PC-9 (cell line): ENCODE measurements at regions of chr20 and their contacts with region 1.

Region 1: DNA sequence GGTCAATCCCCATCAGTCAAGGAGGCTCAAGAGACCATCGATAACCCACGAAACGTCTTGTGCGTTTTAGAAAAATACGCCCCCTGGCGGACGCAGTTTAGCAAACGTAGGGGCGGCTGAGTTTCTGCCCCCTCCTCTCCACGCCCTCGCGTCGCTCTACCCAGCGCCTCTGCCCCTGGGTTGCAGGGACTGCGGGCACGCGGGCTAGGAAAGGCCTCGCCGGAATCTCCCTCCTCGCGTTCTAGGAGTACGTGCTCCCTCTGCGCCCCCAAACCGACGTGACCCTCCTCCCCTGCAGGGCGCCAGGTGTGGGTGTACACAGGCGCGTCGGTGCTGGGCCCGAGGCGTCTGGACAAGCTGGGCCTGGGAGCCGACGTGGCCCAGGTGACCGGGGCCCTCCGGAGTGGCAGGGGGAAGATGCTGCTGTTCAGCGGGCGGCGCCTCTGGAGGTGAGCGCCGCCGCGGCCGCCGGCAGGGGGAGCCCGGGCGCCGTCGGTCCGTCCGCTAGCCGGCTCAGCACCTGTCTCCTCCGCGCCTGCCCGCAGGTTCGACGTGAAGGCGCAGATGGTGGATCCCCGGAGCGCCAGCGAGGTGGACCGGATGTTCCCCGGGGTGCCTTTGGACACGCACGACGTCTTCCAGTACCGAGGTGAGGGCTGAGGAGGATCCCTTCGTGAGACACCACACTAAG is 5.3 kb downstream of the MMP9 start:
- DNase-seq: peak in 1 of 2 experiments; percentile 71
- H3K4me3 ChIP-seq: no peak overlapping the region
- H3K27ac ChIP-seq: no peak overlapping the region
- H3K4me1 ChIP-seq: peaks cover 3% of the 10 kb centered on the region; the same call in 1 of the 2 replicates
- H3K27me3 ChIP-seq: no peaks in the 10 kb centered on the region
- CTCF ChIP-seq: peak; percentile 96

Region 2: GRCh38 chr20:45742581-45742980 is 271.4 kb before region 1 on chr20:
- CTCF ChIA-PET with region 1: no interaction called
- POLR2A ChIA-PET with region 1: no interaction called
- intact Hi-C with region 1: no loop called
- DNase-seq: no peak
- H3K4me3 ChIP-seq: no peak overlapping the region
- H3K27ac ChIP-seq: no peak overlapping the region
- H3K4me1 ChIP-seq: no peaks in the 10 kb centered on the region
- H3K27me3 ChIP-seq: no peaks in the 10 kb centered on the region
- CTCF ChIP-seq: no peak

Region 3: DNA sequence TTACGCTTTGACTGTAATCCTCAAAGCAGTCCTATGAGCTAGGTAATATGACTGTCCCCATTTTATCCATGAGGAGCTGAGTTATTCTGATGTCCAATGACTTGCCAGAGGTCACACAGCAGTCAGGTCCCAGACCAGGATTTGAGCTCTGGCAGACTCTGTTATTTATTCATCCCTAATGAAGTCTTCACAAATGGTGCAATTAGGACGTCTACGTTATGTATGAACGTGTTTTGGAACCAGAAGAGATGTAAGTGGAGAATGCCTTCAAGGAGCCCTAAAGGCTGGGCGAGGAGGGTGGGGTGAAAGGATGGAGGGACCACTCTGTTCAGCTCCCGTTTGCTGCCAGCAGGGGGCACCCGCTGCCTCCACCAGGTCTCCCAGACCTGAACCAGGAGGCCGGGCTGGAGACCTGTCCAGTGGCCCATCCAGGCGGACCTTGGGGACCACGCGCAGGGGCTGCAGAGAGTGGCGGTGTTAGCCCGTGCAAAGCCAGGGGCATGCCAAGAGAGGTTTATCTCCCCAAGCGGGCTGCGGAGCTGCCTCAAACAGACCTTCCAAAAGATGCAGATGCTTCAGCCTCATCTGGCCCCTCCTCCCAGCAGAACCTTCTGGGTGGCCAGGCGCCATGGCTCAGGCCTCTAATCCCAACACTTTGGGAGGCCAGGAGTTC is 26.7 kb before region 1 on chr20:
- CTCF ChIA-PET with region 1: interaction called, 15 read pairs
- POLR2A ChIA-PET with region 1: no interaction called
- intact Hi-C with region 1: loop called (anchors 1 kb)
- DNase-seq: peak; percentile 60 to 85
- H3K4me3 ChIP-seq: no peak overlapping the region
- H3K27ac ChIP-seq: no peak overlapping the region
- H3K4me1 ChIP-seq: peaks cover 5% of the 10 kb centered on the region
- H3K27me3 ChIP-seq: no peaks in the 10 kb centered on the region
- CTCF ChIP-seq: peak; percentile 93

Region 4: DNA sequence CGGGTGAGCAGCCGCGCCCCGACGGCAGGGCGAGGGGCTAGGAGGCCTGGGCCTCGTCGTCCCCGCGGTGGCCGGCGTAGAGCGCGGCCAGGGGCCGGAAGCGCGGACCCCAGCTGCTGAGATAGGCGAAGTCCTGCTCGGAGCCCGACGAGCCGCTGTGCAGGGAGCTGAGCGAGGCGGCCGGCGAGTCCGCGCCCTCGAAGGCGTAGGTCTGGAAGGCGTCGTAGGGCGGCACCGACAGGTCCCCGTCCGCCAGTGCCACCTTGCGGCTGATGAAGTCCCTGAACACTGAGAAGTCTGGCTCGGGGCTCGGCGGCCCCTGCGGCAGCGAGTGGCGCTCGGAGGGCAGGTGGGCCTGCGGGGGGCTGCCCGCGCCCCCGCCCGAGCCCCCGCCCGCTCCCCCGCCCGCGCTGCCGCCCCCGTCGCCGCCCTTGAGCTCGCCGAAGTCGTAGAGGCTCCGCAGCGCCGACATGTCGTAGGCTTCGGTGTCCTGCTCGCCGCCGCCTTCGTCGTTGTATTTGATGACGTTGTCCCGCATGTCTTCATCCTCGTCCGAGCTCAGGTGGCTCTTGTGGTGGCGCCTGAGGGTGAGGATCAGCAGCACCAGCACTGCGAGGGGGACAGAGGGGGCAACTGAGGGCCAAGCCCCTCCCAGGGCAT is 160.6 kb after region 1 on chr20:
- CTCF ChIA-PET with region 1: no interaction called
- POLR2A ChIA-PET with region 1: no interaction called
- intact Hi-C with region 1: loop called (anchors 2 kb)
- DNase-seq: peak in 1 of 2 experiments; percentile 58
- H3K4me3 ChIP-seq: no peak overlapping the region
- H3K27ac ChIP-seq: no peak overlapping the region
- H3K4me1 ChIP-seq: no peaks in the 10 kb centered on the region
- H3K27me3 ChIP-seq: peaks cover 96% of the 10 kb centered on the region
- CTCF ChIP-seq: 0 out of 2 replicates have a peak, but pooled peaks have one; percentile 23

Region 5: GRCh38 chr20:46914789-46915379 is 900.9 kb after region 1 on chr20:
- CTCF ChIA-PET with region 1: no interaction called
- POLR2A ChIA-PET with region 1: no interaction called
- intact Hi-C with region 1: no loop called
- DNase-seq: no peak
- H3K4me3 ChIP-seq: no peak overlapping the region
- H3K27ac ChIP-seq: no peak overlapping the region
- H3K4me1 ChIP-seq: no peaks in the 10 kb centered on the region
- H3K27me3 ChIP-seq: peaks cover 43% of the 10 kb centered on the region
- CTCF ChIP-seq: no peak